ENCODE measurements at regions of chr16 and their contacts with region 1.

Region 1: GRCh38 chr16:87765776-87766484 is at the start of gene KLHDC4:
- DNase-seq: peak; percentile 87 to 95 (median 91)
- H3K4me3 ChIP-seq: peak within 1 kb of the TSS; percentile 75 to 99 (median 98)
- H3K27ac ChIP-seq: peak within 1 kb of the TSS; percentile 74 to 93 (median 77)
- H3K4me1 ChIP-seq: peaks cover 13 to 17% of the 10 kb centered on the region in 2 donors
- H3K27me3 ChIP-seq: no peaks in the 10 kb centered on the region
- CTCF ChIP-seq: no peak
- POLR2A ChIP-seq: peak; percentile 60 to 79
- total RNA-seq, gene KLHDC4: 15.4 to 40.1 (median 22.2) TPM

Region 2: DNA sequence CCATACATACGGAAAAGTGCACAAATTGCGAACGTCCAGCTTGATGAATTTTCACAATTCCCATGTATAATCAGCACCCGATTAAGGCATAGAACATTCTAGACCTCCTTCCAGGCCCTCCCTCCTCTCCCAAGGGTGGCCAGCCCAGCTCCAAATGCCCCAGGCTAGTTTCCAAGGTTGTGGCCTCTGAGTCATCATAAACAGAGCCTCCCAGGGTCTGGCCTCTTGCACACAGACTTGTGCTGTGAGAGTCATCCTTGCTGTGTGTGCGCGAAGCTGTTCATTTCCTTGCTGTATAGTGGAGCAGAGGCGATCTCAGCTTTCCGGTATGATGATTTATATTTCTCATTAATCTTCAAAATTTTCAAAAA is 184.1 kb before region 1 on chr16:
- intact Hi-C with region 1: loop called (anchors 5 to 10 kb)
- DNase-seq: peak; percentile 82 to 92 (median 90)
- H3K4me3 ChIP-seq: peak overlapping the region in 1 of 4 donors; percentile 14
- H3K27ac ChIP-seq: peak overlapping the region; percentile 80 to 95 (median 91)
- H3K4me1 ChIP-seq: peaks cover 20 to 28% of the 10 kb centered on the region in 2 donors
- H3K27me3 ChIP-seq: no peaks in the 10 kb centered on the region
- CTCF ChIP-seq: no peak
- POLR2A ChIP-seq: no peak

Region 3: DNA sequence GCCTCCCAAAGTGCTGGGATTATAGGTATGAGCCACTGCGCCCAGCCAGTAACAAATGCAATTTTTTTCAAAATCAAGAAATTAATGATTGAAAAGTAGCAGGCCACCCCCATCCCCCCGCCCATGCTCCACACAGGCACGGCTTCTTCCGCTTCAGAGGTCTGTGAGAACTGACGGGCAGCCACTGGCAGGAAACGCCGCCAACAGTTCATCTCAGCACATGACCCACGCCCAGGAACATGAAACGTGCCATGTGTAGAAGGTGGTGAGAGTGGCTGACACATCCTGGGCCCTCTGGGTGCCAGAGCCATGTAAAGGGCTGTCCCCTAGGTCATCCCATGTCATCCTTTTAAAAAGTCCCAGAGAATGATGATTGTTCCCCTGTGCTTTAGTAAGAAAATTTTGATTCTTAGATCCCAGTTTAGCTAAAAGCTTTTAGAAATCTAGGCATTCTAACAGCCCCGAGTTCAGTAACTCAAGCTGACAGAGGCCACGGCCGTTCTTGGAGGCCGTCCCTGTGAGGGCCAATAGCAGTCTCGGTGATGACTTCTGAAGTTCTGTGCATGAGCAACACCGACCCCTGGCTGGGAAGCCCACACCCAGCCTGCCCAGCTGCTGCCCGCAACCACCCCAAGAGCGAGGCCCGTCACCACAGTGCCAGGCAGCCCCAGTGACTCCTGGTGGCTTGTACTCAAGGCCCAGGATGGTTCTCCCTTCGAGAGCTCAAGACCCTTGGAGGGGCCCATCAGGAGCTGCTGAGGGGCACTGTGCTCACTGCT is 52.3 kb before region 1 on chr16:
- intact Hi-C with region 1: no loop called
- DNase-seq: no peak
- H3K4me3 ChIP-seq: no peak overlapping the region
- H3K27ac ChIP-seq: no peak overlapping the region
- H3K4me1 ChIP-seq: no peaks in the 10 kb centered on the region
- H3K27me3 ChIP-seq: no peaks in the 10 kb centered on the region
- CTCF ChIP-seq: no peak
- POLR2A ChIP-seq: no peak

Region 4: DNA sequence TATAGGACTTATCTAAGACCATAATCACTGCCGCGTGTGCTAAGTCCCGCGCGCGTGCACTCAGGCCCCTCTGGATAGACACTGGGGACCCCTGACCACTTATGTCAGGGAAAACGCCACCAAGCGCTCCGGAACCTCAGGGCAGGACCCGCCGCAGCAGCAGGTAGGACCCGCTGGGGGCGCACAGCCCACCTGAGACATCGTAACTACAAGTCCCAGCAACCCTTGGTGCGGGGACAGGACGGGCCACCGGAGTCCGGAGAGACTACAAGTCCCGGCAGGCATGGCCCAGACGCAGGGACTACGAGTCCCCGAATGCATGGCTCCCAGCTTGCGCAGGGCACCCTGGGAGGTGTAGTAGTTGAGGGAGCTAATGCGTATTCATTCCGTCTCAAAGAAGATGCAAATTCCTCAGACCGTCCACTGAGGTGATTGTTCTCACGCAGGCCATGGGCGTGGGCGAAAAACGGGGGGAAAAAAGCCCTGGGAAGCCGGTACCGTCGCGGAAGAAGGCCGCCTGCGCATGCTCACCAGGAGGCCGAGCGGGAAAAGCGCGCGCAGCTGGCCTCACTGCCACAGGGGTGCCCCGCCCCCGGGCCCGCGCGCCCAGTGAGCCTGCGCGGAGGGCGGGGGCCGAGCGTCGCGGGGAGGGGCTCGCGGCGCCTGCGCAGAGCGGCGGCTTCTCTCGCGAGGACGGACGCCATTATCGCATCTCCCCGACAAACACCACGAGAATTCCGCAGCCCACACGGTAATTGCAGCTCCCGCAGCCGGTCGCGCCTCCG is 185.0 kb after region 1 on chr16 and contains the start of gene BANP:
- intact Hi-C with region 1: no loop called
- DNase-seq: peak; percentile 97 to 99 (median 99)
- H3K4me3 ChIP-seq: peak within 1 kb of the TSS; percentile 77 to 95 (median 87)
- H3K27ac ChIP-seq: peak within 1 kb of the TSS; percentile 78 to 99 (median 94)
- H3K4me1 ChIP-seq: peaks cover 8 to 40% of the 10 kb centered on the region in 2 donors
- H3K27me3 ChIP-seq: no peaks in the 10 kb centered on the region
- CTCF ChIP-seq: peak in 5 of 6 experiments; percentile 36 to 58 (median 43)
- POLR2A ChIP-seq: peak in 1 of 2 donors; percentile 51
- total RNA-seq, gene BANP: 14.0 to 29.8 (median 22.1) TPM

Region 5: GRCh38 chr16:88132836-88133506 is 367.0 kb after region 1 on chr16:
- intact Hi-C with region 1: no loop called
- DNase-seq: no peak
- H3K4me3 ChIP-seq: no peak overlapping the region
- H3K27ac ChIP-seq: no peak overlapping the region
- H3K4me1 ChIP-seq: no peaks in the 10 kb centered on the region
- H3K27me3 ChIP-seq: no peaks in the 10 kb centered on the region
- CTCF ChIP-seq: no peak
- POLR2A ChIP-seq: no peak

Measured in adrenal gland (tissue), 19 donors.